Activated CD4-positive, alpha-beta memory T cell treated with anti-CD3 and anti-CD28 coated beads, Interleukin-2, amount 10 ng/mL, durations not matched to agents 7 days and 5 days (primary cell): ENCODE measurements at regions of chr16 and their contacts with region 1.

Region 1: GRCh38 chr16:46947900-46948547 is 25.4 kb downstream of the DNAJA2 start:
- DNase-seq: peak; percentile 43
- H3K4me3 Mint-ChIP-seq: no peak overlapping the region
- H3K27ac Mint-ChIP-seq: peak overlapping the region; percentile 59
- H3K4me1 Mint-ChIP-seq: peaks cover 32% of the 10 kb centered on the region
- H3K27me3 Mint-ChIP-seq: no peaks in the 10 kb centered on the region

Region 2: DNA sequence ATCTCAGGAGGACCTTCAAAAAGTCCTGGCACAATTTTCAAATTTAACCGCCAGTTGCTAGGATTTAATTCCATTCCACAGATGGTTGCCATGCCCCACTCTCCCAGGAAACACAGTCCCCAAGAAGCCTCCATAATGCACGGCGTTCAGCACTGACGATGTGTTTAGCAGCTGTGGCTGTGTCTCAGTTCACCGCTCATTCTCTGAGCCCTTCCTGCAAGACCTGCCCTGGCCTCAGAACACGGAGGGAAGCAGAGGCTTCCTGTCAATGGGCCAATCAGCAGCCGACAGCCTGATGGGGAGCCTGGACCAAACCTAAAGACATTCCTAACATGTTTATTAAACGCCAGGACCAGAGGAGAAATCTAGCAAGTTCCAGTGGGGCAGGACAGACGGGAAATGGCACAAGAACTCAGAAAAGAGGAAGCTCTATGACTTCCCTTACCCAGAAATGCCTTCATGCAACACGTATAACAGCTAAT is 204.7 kb before region 1 on chr16:
- CTCF ChIA-PET with region 1: no interaction called
- POLR2A ChIA-PET with region 1: no interaction called
- DNase-seq: no peak
- H3K4me3 Mint-ChIP-seq: no peak overlapping the region
- H3K27ac Mint-ChIP-seq: no peak overlapping the region
- H3K4me1 Mint-ChIP-seq: peaks cover 5% of the 10 kb centered on the region
- H3K27me3 Mint-ChIP-seq: no peaks in the 10 kb centered on the region

Region 3: DNA sequence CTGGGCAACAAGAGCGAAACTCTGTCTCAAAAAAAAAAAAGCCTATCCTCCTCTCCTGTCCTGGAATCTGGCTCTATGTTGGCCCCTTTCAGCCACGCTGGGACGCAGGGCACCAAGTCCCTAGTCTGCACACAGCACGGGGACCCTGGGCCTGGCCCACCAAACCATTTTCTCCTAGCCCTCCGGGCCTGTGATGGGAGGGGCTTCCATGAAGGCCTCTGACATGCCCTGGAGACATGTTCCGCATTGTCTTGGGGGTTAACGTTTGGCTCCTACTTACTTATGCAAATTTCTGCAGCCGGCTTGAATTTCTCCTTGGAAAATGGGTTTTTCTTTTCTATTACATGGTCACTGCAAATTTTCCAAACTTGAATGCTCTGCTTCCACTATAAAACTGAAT is 76.4 kb before region 1 on chr16:
- CTCF ChIA-PET with region 1: no interaction called
- POLR2A ChIA-PET with region 1: no interaction called
- DNase-seq: no peak
- H3K4me3 Mint-ChIP-seq: no peak overlapping the region
- H3K27ac Mint-ChIP-seq: no peak overlapping the region
- H3K4me1 Mint-ChIP-seq: no peaks in the 10 kb centered on the region
- H3K27me3 Mint-ChIP-seq: peaks cover 2% of the 10 kb centered on the region

Region 4: GRCh38 chr16:46929378-46930332 is 18.4 kb before region 1 on chr16:
- CTCF ChIA-PET with region 1: interaction called, 13 read pairs
- POLR2A ChIA-PET with region 1: no interaction called
- DNase-seq: peak; percentile 75
- H3K4me3 Mint-ChIP-seq: no peak overlapping the region
- H3K27ac Mint-ChIP-seq: no peak overlapping the region
- H3K4me1 Mint-ChIP-seq: peaks cover 1% of the 10 kb centered on the region
- H3K27me3 Mint-ChIP-seq: no peaks in the 10 kb centered on the region

Region 5: DNA sequence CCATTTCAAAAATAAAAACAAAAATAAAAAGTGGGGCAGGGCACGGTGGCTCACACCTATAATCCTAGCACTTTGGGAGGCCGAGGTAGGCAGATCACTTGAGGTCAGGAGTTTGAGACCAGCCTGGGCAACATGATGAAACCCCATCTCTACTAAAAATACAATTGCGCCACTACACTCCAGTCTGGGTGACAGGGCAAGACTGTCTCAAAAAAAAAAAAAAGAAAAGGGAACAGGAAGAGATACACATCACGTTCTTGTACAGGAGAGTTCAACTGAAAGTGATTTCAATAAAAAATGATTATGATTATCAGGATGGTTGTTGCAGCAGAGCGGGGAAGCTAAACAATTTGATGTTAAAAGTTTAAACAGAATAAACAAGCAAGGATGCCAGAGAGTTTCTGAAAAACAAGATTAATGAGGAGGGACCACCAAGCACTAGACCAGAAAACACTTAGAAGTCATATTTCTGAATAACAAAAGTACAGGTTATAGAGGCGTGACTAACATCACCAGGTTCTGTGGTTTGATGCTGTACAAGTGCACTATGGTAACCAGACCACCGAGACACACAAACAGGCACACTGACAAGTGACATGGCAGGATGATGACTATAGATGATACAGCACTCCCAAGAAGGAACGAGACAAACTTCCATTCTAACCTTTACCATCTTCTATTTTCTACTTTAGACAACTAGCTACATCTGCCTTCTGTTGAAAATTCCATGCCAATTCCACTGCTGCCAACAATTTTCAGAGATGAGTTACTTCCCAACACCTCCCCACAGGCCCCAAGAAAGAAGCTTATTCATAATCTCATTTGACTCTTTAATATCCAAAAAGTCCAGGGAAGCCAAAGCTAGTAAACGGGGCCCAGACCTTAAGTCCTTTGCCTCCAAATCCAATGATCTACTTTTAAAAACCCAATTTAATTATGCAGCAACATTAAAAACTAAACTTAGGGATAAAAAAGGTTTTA is 13.6 kb after region 1 on chr16:
- CTCF ChIA-PET with region 1: interaction called, 10 read pairs
- POLR2A ChIA-PET with region 1: interaction called, 4 read pairs
- DNase-seq: peak; percentile 37
- H3K4me3 Mint-ChIP-seq: no peak overlapping the region
- H3K27ac Mint-ChIP-seq: peak overlapping the region; percentile 58
- H3K4me1 Mint-ChIP-seq: peaks cover 24% of the 10 kb centered on the region
- H3K27me3 Mint-ChIP-seq: no peaks in the 10 kb centered on the region

Region 6: DNA sequence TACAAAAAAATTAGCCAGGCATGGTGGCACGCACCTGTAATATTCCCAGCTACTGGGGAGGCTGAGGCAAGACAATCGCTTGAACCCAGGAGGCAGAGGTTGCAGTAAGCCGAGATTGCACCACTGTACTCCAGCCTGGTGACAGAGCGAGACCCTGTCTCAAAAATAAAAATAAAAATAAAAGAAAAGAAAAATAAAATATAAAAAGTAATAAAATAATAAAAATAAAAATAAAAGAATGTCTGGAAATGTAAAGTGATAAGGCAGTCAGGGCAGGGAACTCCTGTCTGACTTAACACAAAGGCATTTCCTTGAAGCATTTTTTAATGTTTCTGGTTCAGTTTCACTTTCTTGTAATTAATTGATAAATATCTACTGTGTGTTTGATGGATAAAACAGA is 60.1 kb after region 1 on chr16:
- CTCF ChIA-PET with region 1: no interaction called
- POLR2A ChIA-PET with region 1: no interaction called
- DNase-seq: no peak
- H3K4me3 Mint-ChIP-seq: no peak overlapping the region
- H3K27ac Mint-ChIP-seq: no peak overlapping the region
- H3K4me1 Mint-ChIP-seq: peaks cover 2% of the 10 kb centered on the region
- H3K27me3 Mint-ChIP-seq: no peaks in the 10 kb centered on the region

Region 7: GRCh38 chr16:47150067-47150466 is 202.0 kb after region 1 on chr16:
- CTCF ChIA-PET with region 1: no interaction called
- POLR2A ChIA-PET with region 1: no interaction called
- DNase-seq: peak; percentile 43
- H3K4me3 Mint-ChIP-seq: no peak overlapping the region
- H3K27ac Mint-ChIP-seq: no peak overlapping the region
- H3K4me1 Mint-ChIP-seq: peaks cover 12% of the 10 kb centered on the region
- H3K27me3 Mint-ChIP-seq: peaks cover 12% of the 10 kb centered on the region

Region 8: DNA sequence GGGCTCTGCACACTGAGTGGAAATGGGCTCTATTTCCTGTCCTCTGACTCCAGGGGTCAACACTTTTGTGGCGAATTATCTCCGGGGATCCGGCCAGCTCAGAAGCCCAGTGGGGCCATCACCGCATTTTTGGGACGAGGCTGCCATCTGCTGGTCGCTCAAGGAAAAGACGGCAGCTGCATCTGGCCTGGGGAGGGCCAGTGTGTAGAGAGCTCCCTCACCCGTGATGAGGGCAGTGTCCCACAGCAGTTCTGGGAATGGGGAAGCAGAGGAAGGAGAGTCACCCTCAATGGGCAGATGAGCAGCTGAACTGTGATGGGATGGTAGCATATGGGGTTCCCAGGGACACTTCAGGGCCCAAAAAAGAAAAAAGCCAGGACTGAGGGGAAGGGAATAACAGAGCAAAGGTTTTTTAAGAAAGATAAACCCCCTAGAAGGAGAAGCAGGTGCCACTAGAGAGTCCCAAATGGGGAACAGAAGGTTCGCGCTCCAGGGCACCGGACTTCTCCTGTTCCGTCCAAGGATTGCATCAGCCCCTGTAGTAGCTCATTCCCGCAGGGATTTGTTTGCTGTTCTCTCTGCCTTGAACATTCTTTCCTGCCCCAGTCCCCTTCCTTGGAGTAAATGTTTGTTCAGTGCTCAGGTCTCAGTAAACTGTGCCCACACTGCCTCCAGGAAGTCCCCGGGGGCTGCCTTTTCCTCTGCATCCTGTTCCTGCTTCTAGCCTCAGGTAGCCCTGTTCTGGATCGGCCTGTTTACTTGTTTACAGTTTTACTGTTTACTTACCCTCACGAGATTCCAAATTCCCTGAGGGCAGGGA is 1217.1 kb after region 1 on chr16:
- CTCF ChIA-PET with region 1: interaction called, 14 read pairs
- POLR2A ChIA-PET with region 1: no interaction called
- DNase-seq: peak; percentile 70
- H3K4me3 Mint-ChIP-seq: no peak overlapping the region
- H3K27ac Mint-ChIP-seq: no peak overlapping the region
- H3K4me1 Mint-ChIP-seq: peaks cover 12% of the 10 kb centered on the region
- H3K27me3 Mint-ChIP-seq: peaks cover 4% of the 10 kb centered on the region